ENCODE measurements at regions of chr6 and their contacts with region 1.

Region 1: GRCh38 chr6:129672881-129673643 is 36.9 kb downstream of the ARHGAP18 start:
- DNase-seq: no peak
- H3K4me3 Mint-ChIP-seq: peak overlapping the region; percentile 61
- H3K27ac Mint-ChIP-seq: peak overlapping the region; percentile 90
- H3K4me1 Mint-ChIP-seq: peaks cover 52% of the 10 kb centered on the region
- H3K27me3 Mint-ChIP-seq: no peaks in the 10 kb centered on the region

Region 2: GRCh38 chr6:129598244-129599187 is 74.5 kb before region 1 on chr6:
- intact Hi-C with region 1: loop called (anchors 2 kb)
- DNase-seq: no peak
- H3K4me3 Mint-ChIP-seq: no peak overlapping the region
- H3K27ac Mint-ChIP-seq: no peak overlapping the region
- H3K4me1 Mint-ChIP-seq: peaks cover 3% of the 10 kb centered on the region
- H3K27me3 Mint-ChIP-seq: no peaks in the 10 kb centered on the region

Region 3: GRCh38 chr6:129695373-129696027 is 22.4 kb after region 1 on chr6:
- intact Hi-C with region 1: loop called (anchors 1 kb)
- DNase-seq: no peak
- H3K4me3 Mint-ChIP-seq: peak overlapping the region; percentile 27
- H3K27ac Mint-ChIP-seq: peak overlapping the region; percentile 74
- H3K4me1 Mint-ChIP-seq: peaks cover 63% of the 10 kb centered on the region
- H3K27me3 Mint-ChIP-seq: no peaks in the 10 kb centered on the region

Region 4: DNA sequence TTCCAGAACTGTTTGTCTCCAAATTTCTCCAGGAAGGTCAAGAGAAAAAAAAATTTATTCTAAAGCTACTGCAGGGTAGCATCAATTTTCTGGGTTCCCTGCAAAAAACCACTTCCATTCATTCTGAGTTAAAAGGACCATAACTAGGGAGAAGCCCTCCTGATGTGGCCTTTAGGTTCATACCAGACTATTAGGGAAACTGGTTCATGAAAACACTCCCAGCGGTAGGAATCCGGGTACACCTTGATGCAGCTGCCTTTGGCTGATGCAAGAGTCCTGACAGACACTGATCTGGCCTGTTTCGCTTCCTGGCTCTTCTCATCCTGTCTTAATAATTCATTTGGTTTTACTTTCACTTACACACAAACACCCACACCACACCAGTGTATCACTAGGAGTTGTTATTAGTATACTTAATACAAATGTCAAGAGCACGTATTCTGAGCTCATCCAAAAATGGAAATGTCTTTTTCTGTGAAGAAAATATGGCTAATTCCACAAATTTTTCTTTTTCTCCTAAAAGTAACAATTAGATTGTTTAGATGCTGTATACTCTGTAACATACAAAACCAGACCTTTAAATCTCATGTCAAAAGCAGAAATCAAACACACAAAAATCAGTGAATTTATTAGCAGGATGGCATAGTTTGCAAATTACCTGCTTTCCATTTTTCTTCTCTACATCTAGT is 75.3 kb after region 1 on chr6:
- intact Hi-C with region 1: loop called (anchors 1 kb)
- DNase-seq: peak; percentile 39
- H3K4me3 Mint-ChIP-seq: peak overlapping the region; percentile 55
- H3K27ac Mint-ChIP-seq: peak overlapping the region; percentile 54
- H3K4me1 Mint-ChIP-seq: peaks cover 44% of the 10 kb centered on the region
- H3K27me3 Mint-ChIP-seq: no peaks in the 10 kb centered on the region

Region 5: DNA sequence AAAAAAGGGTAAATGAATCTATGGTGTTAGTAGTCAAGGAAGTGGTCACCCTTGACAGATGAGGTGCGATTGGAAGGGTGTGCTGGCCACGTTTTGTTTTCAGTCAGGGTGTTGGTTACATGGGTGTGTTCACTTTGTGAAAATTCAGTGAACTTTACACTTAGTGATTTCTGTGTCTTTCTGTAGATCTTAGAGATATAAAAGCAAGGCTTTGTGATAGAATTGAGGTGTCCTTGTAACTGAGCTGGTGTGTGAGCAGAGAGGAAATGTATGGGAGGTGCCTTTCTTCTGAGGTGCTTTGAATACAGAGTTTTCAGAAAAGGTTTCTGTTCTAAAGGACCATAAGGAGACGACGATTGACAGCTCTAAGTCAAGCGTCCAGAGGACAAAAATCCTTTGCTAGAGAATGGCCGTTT is 459.2 kb after region 1 on chr6:
- intact Hi-C with region 1: loop called (anchors 5 kb)
- DNase-seq: peak; percentile 77
- H3K4me3 Mint-ChIP-seq: peak overlapping the region; percentile 43
- H3K27ac Mint-ChIP-seq: peak overlapping the region; percentile 74
- H3K4me1 Mint-ChIP-seq: peaks cover 85% of the 10 kb centered on the region
- H3K27me3 Mint-ChIP-seq: no peaks in the 10 kb centered on the region

Measured in activated T-helper 2 cell treated with anti-CD3 and anti-CD28 coated beads, Interferon-gamma antibody, Interleukin-2, Interleukin-4, amounts not matched to agents 10 μg/mL and 5 μg/mL and 100 μg/mL, durations not matched to agents 14 hours and 24 hours and 36 hours (primary cell).